ENCODE measurements at regions of chr4 and their contacts with region 1.

Region 1: DNA sequence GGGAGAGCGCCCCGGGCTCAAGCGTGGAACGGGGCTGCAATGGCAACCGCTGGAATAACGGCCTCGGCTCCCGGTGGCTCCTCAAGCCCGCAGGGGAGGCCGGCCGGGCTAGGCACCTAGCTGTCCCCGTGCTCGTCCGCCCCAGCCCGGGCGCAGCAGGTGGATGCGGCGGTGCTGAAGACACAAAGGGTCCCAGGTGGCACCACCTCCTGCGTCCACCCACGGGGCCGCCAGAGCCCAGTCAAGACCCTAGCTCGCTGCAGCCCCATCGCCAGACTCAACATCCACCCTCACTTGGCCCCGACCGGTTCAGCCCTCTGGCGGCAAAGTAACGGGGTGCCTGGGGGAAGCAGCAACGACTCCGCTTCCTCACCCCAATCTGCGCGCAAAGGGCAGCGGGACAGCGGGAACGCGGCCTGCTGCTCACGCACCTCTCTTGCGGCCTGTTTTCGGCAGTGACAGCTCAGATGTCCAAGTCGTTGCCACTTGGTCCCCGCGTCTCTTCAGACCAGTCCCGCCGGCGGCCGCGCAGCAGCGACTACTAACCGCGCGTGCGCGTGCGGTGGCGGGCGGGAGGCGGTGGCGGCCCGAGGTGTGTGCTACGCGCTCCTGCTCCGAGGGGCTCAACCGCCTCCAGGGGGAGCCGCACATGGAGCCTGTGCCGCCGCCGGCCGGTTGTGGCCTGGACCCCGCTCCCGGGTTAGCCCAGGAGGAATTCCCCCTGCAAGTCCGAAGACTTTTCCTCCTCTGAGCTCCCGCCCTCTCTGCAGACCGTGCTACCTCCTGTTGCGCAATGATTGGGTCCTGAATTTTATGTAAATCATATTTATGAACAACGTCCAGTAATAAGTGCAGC is at the start of gene CLGN:
- DNase-seq: peak; percentile 86
- ATAC-seq: peak; percentile 93
- total RNA-seq, gene CLGN: 76.3 TPM

Region 2: DNA sequence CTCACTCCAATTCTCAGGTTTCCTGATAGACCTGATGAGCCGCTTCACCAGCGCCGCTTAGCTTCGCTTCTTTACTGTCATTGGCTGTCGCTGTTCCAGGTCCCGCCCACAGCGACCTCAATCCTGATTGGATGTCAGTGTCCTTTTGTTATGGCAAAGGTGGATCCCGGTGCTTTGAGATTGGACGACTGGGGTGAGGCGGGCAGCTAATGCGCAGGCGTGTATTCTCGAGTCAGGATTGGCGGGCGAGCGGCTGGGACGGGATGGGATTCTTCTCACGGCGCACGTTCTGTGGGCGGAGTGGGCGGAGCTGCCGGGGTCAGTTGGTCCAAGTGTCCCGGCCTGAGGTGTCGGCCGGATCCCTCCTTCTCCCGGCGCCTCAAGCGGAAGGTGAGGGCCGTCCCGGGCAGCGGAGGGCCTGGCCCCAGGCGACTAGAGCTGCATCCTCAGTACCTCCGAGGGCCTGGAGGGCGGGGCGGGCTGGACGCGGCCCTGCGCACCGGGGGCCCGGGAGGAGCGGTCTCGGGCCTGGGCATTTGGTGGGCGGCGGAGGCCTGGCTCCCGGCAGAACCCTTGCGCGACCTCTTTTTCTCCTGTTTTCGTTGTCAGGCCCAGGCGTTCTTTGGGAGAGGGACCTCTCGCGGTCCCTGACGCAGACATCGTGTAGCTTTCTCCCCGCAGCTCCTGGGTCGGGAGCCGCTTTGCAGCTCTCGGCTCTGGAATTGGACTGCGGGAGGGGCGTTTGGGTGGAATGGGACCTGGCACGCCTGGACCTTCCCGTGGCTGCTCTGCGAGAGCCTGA is 53.8 kb before region 1 on chr4 and contains the start of gene SCOC:
- intact Hi-C with region 1: loop called (anchors 2 kb)
- DNase-seq: peak; percentile 98
- ATAC-seq: peak; percentile 99
- total RNA-seq, gene SCOC: 75.3 TPM

Region 3: DNA sequence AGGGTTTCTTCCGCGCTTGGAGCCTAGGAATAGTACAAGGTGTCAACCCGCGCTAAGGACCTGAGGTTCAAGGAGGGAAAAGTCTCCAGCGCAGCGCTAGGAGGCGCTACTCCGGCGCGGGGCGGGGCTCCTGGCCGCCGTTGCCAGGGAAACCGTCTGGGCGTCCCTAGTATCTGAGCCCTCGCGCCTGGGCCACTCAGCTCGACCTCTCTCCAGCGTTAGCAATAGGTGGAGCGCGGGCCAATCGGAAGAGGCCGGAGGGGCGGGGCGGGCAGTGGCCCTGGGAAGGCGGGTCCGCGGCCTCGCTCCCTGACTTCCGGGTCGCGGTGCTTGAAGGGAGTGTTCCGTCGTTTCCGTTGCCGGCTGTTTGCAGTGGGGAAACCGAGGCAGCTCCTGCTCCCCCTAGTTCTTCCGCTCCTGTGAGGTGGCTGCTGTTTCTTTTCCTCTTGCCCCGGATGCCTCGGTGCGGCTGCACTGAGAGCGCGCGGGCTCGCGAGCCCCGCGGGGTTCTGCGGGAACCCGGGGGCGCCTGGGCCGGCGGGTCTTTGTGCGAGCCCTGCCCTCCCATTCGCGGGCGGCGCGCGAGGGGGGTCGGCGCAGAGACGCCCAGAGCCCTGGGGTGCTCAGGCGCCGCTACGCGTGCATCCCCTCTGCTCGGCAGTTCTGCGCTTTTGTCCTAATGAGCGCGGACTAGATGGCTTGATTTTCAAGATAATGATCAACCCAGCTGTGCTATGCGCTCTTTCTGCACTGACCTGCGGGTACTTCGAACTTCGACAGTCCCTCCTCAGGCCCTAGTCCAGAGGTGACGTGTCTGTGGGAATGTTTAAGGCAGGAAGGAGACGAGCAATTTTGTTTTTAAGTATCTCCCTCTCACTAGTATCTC is 96.8 kb after region 1 on chr4 and contains the start of gene ELMOD2:
- intact Hi-C with region 1: loop called (anchors 5 kb)
- DNase-seq: peak; percentile 100
- ATAC-seq: peak; percentile 100
- total RNA-seq, gene ELMOD2: 14.6 TPM

Region 4: GRCh38 chr4:140609548-140610425 is 182.5 kb after region 1 on chr4:
- intact Hi-C with region 1: loop called (anchors 10 kb)
- DNase-seq: no peak
- ATAC-seq: peak; percentile 76